ENCODE measurements at regions of chr10 and their contacts with region 1.

Region 1: DNA sequence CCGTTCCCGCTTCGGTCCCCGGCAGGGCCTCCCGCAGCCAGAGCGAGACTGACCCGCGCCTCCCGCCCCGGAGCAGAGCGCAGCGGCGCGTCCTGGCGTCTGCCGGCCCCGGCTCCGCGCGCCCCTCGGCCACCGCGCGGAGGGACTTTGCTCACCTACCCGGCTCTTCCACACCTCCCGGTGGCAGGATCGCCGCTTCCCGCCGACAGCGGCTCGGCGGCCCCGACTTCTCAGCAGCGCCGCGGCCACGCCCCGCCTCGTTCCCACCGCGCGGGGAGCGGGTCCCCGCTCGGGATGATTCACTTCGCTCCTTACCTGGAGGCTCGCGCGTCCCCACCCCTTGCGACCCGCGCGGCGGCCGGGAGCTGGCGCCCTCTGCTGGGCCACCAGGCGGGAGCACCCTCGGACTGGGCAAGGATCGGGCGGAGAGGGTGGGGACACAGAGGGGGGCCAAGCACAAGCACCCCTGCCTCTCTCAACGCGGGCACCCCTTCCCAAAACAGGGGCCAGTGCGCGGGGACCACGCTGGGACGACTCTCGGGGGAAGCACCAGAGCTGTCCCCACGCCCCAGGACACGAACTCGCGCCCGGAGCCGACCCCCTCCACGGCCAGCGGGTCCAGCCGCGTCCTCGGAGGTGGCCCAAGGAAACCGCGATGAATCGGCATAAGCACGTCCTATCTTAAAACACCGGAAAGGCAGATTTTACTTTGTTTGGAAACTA is 101.0 kb upstream of the SVIL start:
- DNase-seq: peak; percentile 66 to 77 (median 73)
- H3K4me3 ChIP-seq: peak overlapping the region; percentile 49
- H3K4me3 Mint-ChIP-seq: peak overlapping the region; percentile 76 to 94 (median 83)
- H3K27ac ChIP-seq: peak overlapping the region; percentile 47
- H3K27ac Mint-ChIP-seq: peak overlapping the region in 3 of 8 donors; percentile 45 to 66 (median 66)
- H3K4me1 ChIP-seq: peaks cover 23% of the 10 kb centered on the region
- H3K4me1 Mint-ChIP-seq: peaks cover 28 to 34% (median 30%) of the 10 kb centered on the region in 3 donors
- H3K27me3 ChIP-seq: no peaks in the 10 kb centered on the region
- H3K27me3 Mint-ChIP-seq: peaks cover 3 to 4% of the 10 kb centered on the region in 2 donors

Region 2: DNA sequence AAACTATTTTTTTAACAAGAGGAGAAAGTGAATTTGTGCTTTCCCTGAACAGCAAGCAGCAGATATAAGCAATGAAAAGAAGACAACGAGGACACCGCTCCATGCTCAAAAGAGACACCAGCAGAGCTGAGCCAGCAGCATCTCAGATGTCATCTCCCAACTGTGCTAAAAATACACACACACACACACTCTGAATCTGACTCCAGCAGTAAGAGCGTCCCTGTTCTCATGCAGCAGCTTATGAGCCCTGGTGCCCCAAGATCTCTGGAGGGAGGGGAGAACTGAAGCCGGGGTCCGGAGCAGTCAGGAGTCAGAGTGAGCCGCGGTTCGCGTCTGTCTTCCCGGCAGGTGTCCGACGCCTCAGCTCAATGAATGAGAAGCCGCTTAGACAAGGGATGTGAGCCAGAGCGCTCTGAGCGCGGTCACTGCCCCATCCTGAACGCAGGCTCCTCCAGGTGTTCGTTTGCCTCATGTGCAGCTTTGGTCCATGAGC is 150.2 kb before region 1 on chr10:
- CTCF ChIA-PET with region 1: no interaction called
- POLR2A ChIA-PET with region 1: no interaction called
- DNase-seq: no peak
- H3K4me3 ChIP-seq: no peak overlapping the region
- H3K4me3 Mint-ChIP-seq: no peak overlapping the region
- H3K27ac ChIP-seq: no peak overlapping the region
- H3K27ac Mint-ChIP-seq: no peak overlapping the region
- H3K4me1 ChIP-seq: peaks cover 5% of the 10 kb centered on the region
- H3K4me1 Mint-ChIP-seq: peaks cover 7 to 16% (median 9%) of the 10 kb centered on the region in 3 donors
- H3K27me3 ChIP-seq: no peaks in the 10 kb centered on the region
- H3K27me3 Mint-ChIP-seq: peaks cover 0 to 9% of the 10 kb centered on the region in 2 donors

Region 3: GRCh38 chr10:29658984-29659965 is 76.5 kb before region 1 on chr10:
- CTCF ChIA-PET with region 1: interaction called, 10 read pairs
- POLR2A ChIA-PET with region 1: interaction called, 4 read pairs
- DNase-seq: peak; percentile 51 to 83 (median 69)
- H3K4me3 ChIP-seq: no peak overlapping the region
- H3K4me3 Mint-ChIP-seq: peak overlapping the region; percentile 8 to 79 (median 77)
- H3K27ac ChIP-seq: no peak overlapping the region
- H3K27ac Mint-ChIP-seq: peak overlapping the region; percentile 75 to 98 (median 92)
- H3K4me1 ChIP-seq: peaks cover 38% of the 10 kb centered on the region
- H3K4me1 Mint-ChIP-seq: peaks cover 33 to 40% (median 38%) of the 10 kb centered on the region in 3 donors
- H3K27me3 ChIP-seq: no peaks in the 10 kb centered on the region
- H3K27me3 Mint-ChIP-seq: peaks cover 2 to 5% of the 10 kb centered on the region in 2 donors